Pancreas (tissue), 10 donors: ENCODE measurements at regions of chr4 and their contacts with region 1.

Region 1: DNA sequence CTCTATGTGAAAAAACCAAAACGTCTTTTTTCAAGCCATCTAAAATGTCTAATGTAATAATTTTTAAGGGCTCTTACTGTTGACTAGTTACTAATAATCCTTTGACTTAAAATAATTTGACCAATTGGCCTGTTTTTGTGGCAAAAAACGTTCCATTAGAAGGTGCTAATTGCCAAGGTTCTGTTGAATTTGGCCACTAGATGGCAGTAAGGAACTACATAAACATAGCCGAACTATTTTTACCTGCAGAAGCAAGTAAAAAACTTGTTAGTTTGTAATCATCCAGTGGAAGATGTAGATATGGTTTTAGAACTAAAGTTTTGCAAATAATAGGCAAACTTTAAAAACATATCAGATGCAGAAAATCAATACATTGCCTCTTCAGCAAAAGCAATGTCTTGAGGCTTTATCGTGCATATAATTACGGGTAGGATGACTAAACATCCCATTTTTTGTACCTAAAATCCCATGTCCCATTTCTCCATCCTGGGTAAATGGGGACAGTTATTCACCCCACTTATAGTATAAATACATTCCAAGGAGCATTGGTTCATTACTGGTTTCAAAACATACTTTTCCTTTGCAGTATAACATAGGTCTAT is 57.6 kb downstream of the PROM1 start:
- DNase-seq: peak in 1 of 6 donors; percentile 31
- ATAC-seq: peak; percentile 60 to 81 (median 80)
- H3K4me3 ChIP-seq: no peak overlapping the region
- H3K27ac ChIP-seq: no peak overlapping the region
- H3K4me1 ChIP-seq: no peaks in the 10 kb centered on the region
- H3K27me3 ChIP-seq: no peaks in the 10 kb centered on the region
- CTCF ChIP-seq: peak; percentile 56 to 79 (median 72)

Region 2: DNA sequence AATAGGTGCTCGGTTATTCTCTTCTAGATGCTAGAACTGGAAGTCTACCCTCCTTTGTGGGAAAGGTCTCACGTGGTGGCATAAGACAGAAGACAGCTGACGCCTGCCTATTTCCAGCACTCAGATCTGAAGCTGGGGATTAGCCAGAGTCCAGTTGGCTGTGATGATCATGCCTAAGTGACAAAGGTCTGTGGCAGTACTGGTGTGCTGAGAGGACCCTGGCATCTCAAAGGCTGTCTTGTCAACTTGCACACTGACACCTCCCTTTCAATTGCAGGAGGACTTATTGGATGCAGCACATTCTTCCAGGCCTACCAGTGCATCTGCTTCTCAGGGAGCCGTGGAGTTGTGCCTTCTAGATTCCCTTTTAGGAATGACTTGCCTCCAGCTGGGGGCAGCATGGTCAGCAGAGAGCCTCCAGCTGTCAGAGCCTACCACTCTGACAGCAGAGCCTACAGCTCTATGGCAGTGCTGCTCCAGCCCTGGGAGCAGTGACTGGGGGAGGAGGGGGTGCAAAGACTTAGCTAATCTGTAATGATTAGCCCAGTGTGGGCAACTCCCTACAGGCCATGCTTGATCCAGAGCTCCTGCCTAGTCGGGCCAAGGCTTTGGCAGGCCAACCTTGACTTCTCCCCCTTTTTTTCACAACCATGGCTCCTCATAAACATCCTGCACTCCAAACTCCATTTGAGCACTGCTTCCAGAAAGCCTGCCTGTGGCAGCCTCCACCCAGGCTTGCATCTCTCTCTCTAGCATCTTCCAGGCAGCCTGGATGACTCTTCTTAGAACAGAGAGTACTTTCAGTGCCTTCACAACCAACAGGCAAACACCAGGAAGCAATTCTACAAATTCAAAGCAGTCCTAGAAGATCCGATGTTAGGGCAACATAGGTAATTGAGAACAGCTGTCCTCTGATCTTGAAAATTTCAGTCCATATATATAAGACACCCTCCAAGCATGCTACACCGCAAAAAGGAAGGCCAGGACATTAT is 49.5 kb before region 1 on chr4:
- intact Hi-C with region 1: no loop called
- DNase-seq: no peak
- ATAC-seq: peak in 1 of 4 donors; percentile 18
- H3K4me3 ChIP-seq: no peak overlapping the region
- H3K27ac ChIP-seq: no peak overlapping the region
- H3K4me1 ChIP-seq: no peaks in the 10 kb centered on the region
- H3K27me3 ChIP-seq: no peaks in the 10 kb centered on the region
- CTCF ChIP-seq: no peak

Region 3: DNA sequence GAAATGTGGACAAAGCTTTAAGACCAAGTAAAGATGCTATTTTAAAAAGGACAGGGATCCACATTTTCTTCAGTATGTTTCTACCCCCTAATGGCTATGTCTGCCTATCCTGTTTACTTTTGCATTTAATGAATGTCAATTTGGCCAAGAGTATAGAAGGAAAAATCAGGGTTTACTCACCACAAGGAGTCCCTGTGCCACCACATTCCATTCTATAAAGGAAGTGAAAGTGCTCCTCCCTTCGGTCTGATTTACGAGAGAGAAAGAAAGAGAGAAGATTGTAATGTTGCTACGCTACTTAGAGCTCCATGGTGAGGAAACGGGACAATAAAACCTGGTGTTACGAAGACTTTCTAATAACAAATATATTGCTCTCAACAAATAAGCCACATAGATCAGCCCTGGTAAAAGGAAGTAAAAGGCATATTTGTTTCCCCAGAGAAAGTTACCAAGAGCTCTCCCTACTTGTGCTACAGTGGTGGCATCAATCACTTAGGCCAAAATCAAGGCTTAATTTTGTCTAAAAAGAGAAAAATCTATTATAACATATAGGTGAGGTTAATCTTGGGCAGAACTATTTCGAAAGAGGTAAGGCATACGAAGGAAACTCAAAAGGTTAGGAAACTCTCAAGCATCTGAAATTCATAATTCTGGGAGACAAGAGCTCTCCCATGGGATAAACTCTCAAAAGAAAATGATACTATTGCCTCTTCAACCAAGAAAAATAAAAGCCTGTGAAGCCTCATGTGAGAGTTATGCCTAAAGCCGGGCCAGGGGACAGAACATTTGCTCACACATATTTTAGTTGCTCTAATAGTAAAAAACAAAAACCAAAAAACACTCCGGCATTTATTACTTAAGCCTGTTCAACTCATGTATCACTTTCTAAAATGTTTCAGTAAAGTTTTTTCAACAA is 170.5 kb after region 1 on chr4:
- intact Hi-C with region 1: loop called in 2 of 3 experiments (anchors 5 to 10 kb)
- DNase-seq: peak in 1 of 6 donors; percentile 5
- ATAC-seq: peak; percentile 49 to 87 (median 86)
- H3K4me3 ChIP-seq: no peak overlapping the region
- H3K27ac ChIP-seq: peak overlapping the region; percentile 29 to 67 (median 44)
- H3K4me1 ChIP-seq: peaks cover 0 to 22% (median 9%) of the 10 kb centered on the region in 3 donors
- H3K27me3 ChIP-seq: no peaks in the 10 kb centered on the region
- CTCF ChIP-seq: no peak

Region 4: DNA sequence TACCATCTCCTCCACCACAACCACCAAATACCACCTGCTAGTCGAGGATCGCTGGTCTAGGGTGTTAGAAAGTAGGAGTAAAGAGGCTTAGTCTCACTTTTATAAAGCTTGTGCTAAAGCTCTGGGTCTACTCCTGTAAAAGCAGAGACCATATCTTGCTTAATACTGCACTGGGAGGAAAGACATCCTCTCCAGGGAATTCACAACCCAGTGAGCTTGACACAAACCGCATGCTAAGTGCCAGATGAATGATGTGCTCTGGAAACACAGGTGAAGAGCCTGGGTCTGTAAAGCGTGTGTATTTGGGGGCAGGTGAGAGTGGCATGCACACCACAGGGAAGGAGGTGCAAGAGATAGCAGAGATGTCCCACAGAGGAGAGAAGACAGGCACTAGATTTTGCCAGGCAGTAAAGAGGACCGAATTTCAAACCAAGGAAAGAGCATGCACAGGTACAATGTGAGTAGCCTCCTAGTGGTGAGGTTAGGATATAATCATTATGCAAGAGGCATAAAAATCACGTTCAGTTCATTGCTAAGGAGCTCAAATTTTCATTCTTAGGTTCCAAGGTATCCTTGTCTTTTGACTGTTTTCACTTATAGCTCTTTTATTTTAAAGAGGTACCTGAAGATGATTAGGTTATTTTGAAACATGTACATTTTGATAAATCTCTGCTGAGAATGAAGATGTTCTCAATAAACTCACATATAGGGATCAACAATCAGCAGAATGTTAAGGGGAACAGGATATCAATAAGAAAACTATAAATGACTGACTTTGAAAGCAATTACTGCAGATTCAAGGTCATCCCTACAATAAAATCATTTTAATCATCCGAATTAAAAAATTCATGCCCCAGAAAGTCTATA is 179.3 kb after region 1 on chr4:
- intact Hi-C with region 1: loop called in 1 of 3 experiments (anchors 5 kb)
- DNase-seq: no peak
- ATAC-seq: peak; percentile 64 to 91 (median 82)
- H3K4me3 ChIP-seq: no peak overlapping the region
- H3K27ac ChIP-seq: no peak overlapping the region
- H3K4me1 ChIP-seq: peaks cover 0 to 6% (median 0%) of the 10 kb centered on the region in 3 donors
- H3K27me3 ChIP-seq: no peaks in the 10 kb centered on the region
- CTCF ChIP-seq: peak in 3 of 4 donors; percentile 34 to 51 (median 38)

Region 5: DNA sequence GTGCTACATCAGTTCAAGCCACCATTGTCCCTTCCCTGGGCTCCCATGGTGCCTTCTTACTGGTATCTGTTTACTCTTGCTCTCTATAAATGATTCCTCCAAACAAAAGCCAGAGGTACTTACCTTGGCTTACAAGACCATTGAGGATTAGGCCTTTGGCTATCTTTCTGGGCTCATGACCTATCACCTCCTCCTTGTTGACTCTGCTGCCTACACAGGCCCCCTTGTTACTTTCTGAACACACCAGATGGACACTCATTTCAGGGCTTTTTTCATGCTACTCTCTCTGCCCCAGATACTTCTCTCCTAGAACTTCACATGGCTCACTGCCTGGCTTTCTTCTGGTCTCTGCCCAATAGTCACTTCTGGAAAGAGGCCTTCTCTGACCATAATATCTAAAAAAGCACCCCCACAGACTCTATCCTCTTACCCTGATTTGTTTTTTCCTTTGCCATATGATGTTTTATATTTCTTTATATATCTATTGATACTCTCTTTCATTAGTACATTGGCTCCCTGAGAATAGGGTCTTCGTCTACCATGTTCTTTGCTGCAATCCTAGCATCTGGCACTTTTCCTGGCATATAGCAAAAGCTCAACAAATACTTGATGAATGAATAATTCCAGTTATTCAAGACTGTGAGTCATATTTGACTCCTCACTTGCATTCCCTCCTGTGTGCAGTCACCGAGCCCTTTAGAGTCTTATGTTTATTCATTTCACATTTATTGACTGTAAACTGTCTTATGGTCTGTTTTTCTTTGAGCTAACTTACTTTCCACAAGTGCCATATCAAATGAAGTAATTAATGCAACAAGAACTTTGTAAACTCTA is 227.1 kb after region 1 on chr4:
- intact Hi-C with region 1: loop called in 1 of 3 experiments (anchors 10 kb)
- DNase-seq: no peak
- ATAC-seq: no peak
- H3K4me3 ChIP-seq: no peak overlapping the region
- H3K27ac ChIP-seq: no peak overlapping the region
- H3K4me1 ChIP-seq: peaks cover 0 to 7% (median 0%) of the 10 kb centered on the region in 3 donors
- H3K27me3 ChIP-seq: no peaks in the 10 kb centered on the region
- CTCF ChIP-seq: no peak

Region 6: DNA sequence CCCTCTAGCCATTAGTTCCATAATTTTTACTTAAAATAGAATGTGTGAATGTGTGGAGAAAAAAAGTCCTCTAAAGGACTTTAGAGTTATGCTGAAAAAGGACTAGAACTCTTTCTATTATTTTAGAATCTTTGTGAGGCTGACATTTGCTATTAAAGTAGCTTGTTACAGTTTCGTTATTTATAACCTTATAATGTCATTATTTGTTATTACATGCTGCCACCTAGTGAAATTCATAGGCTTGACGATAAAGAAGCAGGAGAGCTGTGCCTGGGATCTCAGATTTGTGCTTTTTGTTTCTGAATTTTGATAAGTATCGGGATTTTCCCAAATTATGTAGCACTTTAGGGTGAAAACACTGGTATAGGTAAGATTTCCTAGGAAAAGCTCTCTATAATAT is 238.5 kb after region 1 on chr4:
- intact Hi-C with region 1: loop called in 2 of 3 experiments (anchors 10 kb)
- DNase-seq: no peak
- ATAC-seq: peak in 3 of 4 donors; percentile 78 to 84 (median 78)
- H3K4me3 ChIP-seq: no peak overlapping the region
- H3K27ac ChIP-seq: no peak overlapping the region
- H3K4me1 ChIP-seq: no peaks in the 10 kb centered on the region
- H3K27me3 ChIP-seq: no peaks in the 10 kb centered on the region
- CTCF ChIP-seq: peak in 3 of 4 donors; percentile 32 to 42 (median 40)